Calu3 (cell line): ENCODE measurements at regions of chr6 and their contacts with region 1.

Region 1: DNA sequence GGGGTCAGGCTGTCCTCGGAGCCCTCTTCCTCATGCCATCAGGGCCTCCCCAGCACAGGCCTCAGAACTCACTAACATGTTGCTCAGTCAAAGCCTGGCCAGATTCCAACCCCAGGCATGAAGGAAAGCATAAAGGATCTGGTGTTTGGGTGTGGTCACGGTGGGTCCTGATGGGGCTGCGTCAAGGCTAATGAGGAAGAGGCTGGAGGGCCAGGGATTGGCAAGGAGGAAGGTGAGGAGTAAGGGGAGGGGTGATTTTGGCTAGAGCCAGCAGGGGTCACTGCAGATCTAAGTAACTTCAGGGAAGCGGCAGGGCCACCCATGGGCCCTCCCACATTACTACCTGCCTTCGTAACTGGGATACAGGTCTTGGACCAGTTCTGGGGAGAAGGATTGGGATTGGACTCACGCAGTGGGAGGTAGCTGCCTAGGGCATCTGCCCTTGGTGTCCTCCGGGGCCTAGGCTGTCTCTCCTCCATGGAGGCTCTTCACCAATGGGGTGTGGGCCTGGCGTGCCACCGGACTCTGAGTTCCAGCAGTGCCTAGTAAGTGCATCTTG is 36.2 kb upstream of the MRPS18A start:
- DNase-seq: peak; percentile 95
- H3K4me3 Mint-ChIP-seq: peak overlapping the region; percentile 50
- H3K27ac Mint-ChIP-seq: peak overlapping the region; percentile 97
- H3K4me1 Mint-ChIP-seq: peaks cover 52% of the 10 kb centered on the region
- H3K27me3 Mint-ChIP-seq: peaks cover 10% of the 10 kb centered on the region
- CTCF ChIP-seq: peak; percentile 89

Region 2: DNA sequence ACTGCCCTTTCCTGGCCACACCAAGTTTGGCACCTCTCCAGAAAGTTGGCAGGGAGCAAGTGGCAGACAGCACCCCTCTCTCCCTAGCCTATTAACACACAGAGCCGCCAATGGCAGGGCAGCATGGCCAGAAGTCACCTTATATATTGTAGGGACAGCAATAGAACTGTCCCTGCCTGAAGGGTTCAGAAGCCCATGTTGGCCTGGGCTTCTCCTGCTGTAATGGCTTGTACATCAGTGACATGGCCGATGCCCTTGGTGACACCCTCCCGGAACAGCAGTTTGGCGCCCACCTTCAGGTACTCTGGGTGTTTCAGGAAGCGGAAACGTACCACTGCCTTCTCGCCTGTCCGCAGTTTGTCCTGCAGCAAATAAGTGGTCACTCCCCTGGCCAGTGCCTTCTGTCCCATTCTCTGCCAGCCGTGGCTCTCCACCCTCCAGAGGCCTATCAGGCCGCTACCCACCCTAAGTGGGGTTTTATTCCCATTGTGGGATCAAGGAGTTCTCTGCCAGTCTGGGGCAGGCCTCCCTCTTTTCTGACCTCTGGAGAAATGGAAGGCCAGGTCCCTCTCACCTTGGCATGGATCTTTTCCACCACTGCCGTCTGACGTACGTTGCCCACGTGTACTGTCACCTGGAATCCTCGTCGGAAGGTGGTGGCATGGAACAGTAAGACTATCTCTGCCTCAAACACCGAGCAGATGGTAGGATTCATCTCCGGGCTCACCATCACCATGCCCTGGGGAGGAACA is 102.2 kb before region 1 on chr6:
- CTCF ChIA-PET with region 1: interaction called, 10 read pairs
- intact Hi-C with region 1: no loop called
- DNase-seq: no peak
- H3K4me3 Mint-ChIP-seq: no peak overlapping the region
- H3K27ac Mint-ChIP-seq: peak overlapping the region; percentile 34
- H3K4me1 Mint-ChIP-seq: peaks cover 10% of the 10 kb centered on the region
- H3K27me3 Mint-ChIP-seq: no peaks in the 10 kb centered on the region
- CTCF ChIP-seq: no peak

Region 3: DNA sequence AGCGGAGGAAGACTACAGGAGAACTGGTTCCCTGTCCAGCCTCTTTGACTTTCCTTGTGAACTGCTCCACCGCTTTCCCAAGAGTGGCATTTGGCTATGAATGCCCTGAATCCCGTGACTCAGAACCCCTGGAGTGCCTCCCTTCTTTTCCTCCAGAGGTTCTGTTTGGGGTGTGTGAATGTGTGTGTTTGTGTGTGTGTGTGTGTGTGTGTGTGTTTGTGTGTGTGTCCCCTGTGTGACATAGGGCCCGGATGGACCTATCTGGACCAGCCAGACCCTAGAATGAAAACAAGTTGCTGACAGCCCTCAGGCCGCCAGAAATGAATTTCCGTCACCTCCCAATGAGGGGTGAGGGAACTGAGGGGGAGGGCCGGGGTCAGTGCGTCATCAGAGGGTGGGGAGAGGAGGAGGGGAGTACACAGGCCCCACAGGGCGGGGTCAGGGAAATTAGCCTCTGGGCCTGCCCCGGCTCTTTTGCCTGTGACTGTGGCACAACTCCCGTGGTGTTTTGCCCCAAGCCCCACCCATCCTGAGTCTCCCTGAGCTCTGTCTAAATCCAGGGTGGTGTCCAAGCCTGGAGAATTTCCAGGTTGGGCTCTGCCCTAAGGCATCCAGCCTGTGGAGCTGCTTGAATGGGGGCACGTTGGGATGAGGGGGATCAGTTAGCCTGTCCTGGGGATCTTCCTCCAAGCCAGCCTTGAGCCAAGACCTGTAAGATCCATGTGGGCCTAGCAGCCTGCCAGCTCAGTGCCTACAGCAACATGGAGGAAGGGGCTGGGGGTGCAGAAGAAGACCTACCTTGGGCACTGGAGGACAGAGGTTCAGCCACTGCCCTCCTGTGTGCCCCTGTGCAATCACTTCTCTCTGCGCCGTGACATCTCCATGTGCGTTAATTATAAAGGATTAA is 21.0 kb before region 1 on chr6:
- CTCF ChIA-PET with region 1: interaction called, 14 read pairs
- intact Hi-C with region 1: no loop called
- DNase-seq: peak; percentile 98
- H3K4me3 Mint-ChIP-seq: peak overlapping the region; percentile 17
- H3K27ac Mint-ChIP-seq: peak overlapping the region; percentile 58
- H3K4me1 Mint-ChIP-seq: peaks cover 73% of the 10 kb centered on the region
- H3K27me3 Mint-ChIP-seq: no peaks in the 10 kb centered on the region
- CTCF ChIP-seq: no peak

Region 4: GRCh38 chr6:43769526-43770416 is 46.0 kb after region 1 on chr6 and contains the start of gene VEGFA:
- CTCF ChIA-PET with region 1: interaction called, 40 read pairs
- intact Hi-C with region 1: loop called (anchors 1 kb)
- DNase-seq: peak; percentile 97
- H3K4me3 Mint-ChIP-seq: peak within 1 kb of the TSS; percentile 87
- H3K27ac Mint-ChIP-seq: peak within 1 kb of the TSS; percentile 95
- H3K4me1 Mint-ChIP-seq: peaks cover 52% of the 10 kb centered on the region
- H3K27me3 Mint-ChIP-seq: no peaks in the 10 kb centered on the region
- CTCF ChIP-seq: peak; percentile 99
- total RNA-seq, gene VEGFA: 345 and 407 TPM in 2 replicates

Region 5: DNA sequence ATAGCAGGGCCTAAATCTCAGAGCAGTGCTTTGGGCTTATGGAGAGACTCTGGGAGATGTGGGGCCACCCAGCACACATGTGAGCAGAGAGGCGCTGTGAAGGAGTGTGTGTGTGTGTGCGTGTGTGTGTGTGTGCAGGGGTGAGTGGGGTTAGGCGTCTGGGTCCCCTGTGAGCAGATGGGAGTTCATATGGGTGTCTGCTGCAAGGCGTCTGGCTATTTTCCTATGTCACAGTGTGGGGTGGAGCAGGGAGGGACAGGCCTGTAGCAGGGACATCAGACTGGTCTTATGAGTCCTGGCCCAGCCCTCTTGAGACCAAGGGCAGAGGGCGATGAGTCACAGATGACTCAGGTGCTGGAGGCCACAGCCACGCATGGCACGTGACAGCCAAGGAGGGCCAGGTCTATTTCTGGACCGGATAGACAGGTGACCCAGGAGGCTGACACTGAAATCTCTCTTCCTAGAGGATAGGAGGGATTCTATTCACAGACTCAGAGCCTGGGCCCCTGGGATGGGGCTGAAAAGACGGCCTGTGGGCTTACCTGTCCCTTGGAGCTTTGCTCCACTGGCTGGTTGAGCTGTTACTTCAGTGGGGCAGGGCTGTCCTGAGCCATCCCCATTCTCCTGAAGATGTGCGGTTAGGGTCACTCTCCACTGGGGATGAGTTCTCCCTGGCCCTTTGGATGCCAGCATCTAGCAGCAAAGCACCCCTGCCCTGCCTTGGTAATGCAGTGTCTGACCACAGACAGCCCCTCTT is 75.0 kb after region 1 on chr6:
- CTCF ChIA-PET with region 1: interaction called, 5 read pairs
- intact Hi-C with region 1: loop called (anchors 2 kb)
- DNase-seq: peak; percentile 95
- H3K4me3 Mint-ChIP-seq: peak overlapping the region; percentile 35
- H3K27ac Mint-ChIP-seq: peak overlapping the region; percentile 83
- H3K4me1 Mint-ChIP-seq: peaks cover 66% of the 10 kb centered on the region
- H3K27me3 Mint-ChIP-seq: no peaks in the 10 kb centered on the region
- CTCF ChIP-seq: no peak

Region 6: DNA sequence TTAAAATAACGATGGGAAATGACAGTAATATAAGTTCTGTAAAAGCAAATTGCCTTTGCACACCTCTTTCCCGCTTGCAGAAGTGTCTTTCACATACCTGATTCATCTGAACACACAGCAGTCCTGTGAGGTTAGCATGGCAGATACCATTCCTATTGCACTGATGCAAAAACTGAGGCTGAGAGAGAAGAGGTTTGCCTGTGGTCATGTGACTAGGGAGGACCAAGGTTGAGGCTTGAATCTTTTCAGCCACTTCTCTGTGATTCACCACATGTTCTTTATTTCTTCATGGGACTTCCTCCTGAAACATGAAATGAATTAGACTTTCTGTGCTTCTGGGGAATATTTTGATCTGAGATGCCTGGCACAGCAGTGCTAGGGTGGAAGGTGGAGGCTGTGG is 139.1 kb after region 1 on chr6:
- CTCF ChIA-PET with region 1: no interaction called
- intact Hi-C with region 1: no loop called
- DNase-seq: no peak
- H3K4me3 Mint-ChIP-seq: no peak overlapping the region
- H3K27ac Mint-ChIP-seq: no peak overlapping the region
- H3K4me1 Mint-ChIP-seq: peaks cover 11% of the 10 kb centered on the region
- H3K27me3 Mint-ChIP-seq: no peaks in the 10 kb centered on the region
- CTCF ChIP-seq: no peak

Region 7: DNA sequence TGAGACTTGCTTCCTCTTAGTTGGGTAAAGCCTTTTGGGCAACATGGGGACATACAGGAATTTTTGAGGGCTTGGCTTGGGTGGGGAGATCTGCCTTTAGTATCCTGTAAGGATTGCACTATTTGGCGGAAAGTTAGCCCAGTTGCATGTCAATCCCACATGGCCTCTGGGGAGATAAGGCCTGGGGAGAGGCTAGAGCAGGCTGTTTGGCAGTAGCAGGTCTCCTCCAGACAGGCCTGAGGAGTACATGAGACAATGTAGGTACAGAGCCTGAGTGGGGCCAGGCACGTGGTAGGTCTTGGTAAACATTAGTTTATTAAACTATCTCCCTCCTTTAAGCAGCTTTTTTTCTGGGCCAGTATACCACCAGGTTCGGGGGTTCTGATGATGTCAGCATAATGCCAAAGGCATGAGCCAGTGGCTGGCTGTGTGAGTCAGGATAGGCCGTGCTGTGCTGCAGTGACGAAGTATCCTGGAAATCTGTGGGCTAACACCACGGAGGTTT is 194.1 kb after region 1 on chr6:
- CTCF ChIA-PET with region 1: no interaction called
- intact Hi-C with region 1: no loop called
- DNase-seq: no peak
- H3K4me3 Mint-ChIP-seq: no peak overlapping the region
- H3K27ac Mint-ChIP-seq: peak overlapping the region; percentile 16
- H3K4me1 Mint-ChIP-seq: peaks cover 83% of the 10 kb centered on the region
- H3K27me3 Mint-ChIP-seq: no peaks in the 10 kb centered on the region
- CTCF ChIP-seq: no peak

Region 8: GRCh38 chr6:43951063-43951755 is 227.4 kb after region 1 on chr6:
- CTCF ChIA-PET with region 1: interaction called, 6 read pairs
- intact Hi-C with region 1: loop called (anchors 5 kb)
- DNase-seq: peak; percentile 91
- H3K4me3 Mint-ChIP-seq: no peak overlapping the region
- H3K27ac Mint-ChIP-seq: no peak overlapping the region
- H3K4me1 Mint-ChIP-seq: peaks cover 32% of the 10 kb centered on the region
- H3K27me3 Mint-ChIP-seq: no peaks in the 10 kb centered on the region
- CTCF ChIP-seq: peak; percentile 74